ENCODE measurements at regions of chr4 and their contacts with region 1.

Region 1: GRCh38 chr4:151997461-151997860 is 236.7 kb upstream of the GATB start:
- DNase-seq: no peak
- H3K4me3 ChIP-seq: no peak overlapping the region
- H3K27ac ChIP-seq: no peak overlapping the region
- H3K4me1 ChIP-seq: no peaks in the 10 kb centered on the region
- H3K27me3 ChIP-seq: no peaks in the 10 kb centered on the region
- CTCF ChIP-seq: no peak

Region 2: GRCh38 chr4:151563194-151563593 is 434.3 kb before region 1 on chr4:
- intact Hi-C with region 1: no loop called
- DNase-seq: no peak
- H3K4me3 ChIP-seq: no peak overlapping the region
- H3K27ac ChIP-seq: no peak overlapping the region
- H3K4me1 ChIP-seq: no peaks in the 10 kb centered on the region
- H3K27me3 ChIP-seq: no peaks in the 10 kb centered on the region
- CTCF ChIP-seq: no peak

Region 3: GRCh38 chr4:152010710-152011079 is 13.2 kb after region 1 on chr4:
- intact Hi-C with region 1: loop called (anchors 2 kb)
- DNase-seq: no peak
- H3K4me3 ChIP-seq: no peak overlapping the region
- H3K27ac ChIP-seq: no peak overlapping the region
- H3K4me1 ChIP-seq: no peaks in the 10 kb centered on the region
- H3K27me3 ChIP-seq: no peaks in the 10 kb centered on the region
- CTCF ChIP-seq: no peak

Region 4: DNA sequence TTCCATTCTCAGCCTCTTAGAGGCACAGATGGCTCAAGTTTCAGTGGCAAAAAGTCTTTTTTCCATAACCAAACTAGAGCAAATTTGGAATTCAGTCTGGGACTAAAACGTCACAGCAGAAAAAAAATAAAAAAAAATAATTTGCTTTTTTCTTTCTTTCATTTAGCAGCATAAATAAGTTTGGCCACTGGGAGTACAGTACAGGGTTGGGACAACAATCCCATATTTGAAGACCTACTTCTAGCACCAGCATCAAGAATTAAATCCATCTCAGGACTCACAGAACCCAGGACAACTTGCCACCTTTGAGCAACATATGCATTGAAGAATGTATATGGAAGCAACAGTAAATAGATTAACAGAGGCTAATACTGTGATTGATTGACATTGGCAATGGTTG is 324.5 kb after region 1 on chr4:
- intact Hi-C with region 1: no loop called
- DNase-seq: no peak
- H3K4me3 ChIP-seq: no peak overlapping the region
- H3K27ac ChIP-seq: no peak overlapping the region
- H3K4me1 ChIP-seq: no peaks in the 10 kb centered on the region
- H3K27me3 ChIP-seq: no peaks in the 10 kb centered on the region
- CTCF ChIP-seq: no peak

Measured in ascending aorta (tissue), 2 donors.